ENCODE measurements at regions of chr17 and their contacts with region 1.

Region 1: DNA sequence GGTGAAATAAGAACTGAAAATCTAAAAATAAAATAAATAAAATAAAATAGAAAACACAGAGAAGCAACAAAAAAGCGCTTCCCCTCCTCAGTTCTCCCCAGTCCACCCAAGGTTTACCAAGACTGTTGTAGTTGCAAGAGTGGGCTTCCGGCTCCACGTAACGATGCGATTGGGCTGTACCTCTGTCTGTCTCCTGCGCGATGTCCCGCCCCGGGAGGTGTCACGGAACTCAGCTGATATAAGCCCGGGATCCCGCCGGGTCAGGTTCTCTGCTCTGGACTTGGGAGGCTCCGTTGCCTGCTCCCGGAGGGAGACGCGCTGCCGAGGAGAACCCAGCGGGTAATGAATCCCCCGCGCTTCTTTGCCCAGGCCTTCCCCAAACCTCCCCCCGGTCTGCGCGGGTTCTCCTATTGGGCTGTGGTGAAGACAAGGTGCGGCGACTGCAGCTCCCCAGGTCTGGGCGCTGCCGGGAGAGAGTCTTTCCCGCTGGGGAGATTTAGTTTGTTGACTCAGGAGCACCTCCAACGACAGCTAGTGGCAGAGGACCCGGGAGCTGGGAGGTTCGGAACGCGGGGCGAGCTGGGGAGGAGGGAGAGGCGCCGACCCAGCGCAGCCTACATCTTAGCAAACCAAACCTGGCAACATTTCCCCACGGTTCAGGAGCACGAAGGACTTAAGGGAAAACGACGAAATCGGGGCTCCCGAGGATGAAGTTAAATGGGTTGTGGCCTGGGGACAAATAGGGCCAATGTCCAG is at the start of gene SLFN5:
- DNase-seq: peak; percentile 96 to 97
- ATAC-seq: peak; percentile 65 to 86 (median 77)
- H3K4me3 ChIP-seq: peak within 1 kb of the TSS; percentile 78
- H3K4me3 Mint-ChIP-seq: peak within 1 kb of the TSS; percentile 97
- H3K27ac ChIP-seq: peak within 1 kb of the TSS; percentile 98
- H3K27ac Mint-ChIP-seq: peak within 1 kb of the TSS; percentile 97 to 100
- H3K4me1 ChIP-seq: peaks cover 52% of the 10 kb centered on the region
- H3K4me1 Mint-ChIP-seq: peaks cover 73 to 76% of the 10 kb centered on the region in 2 donors
- H3K27me3 ChIP-seq: no peaks in the 10 kb centered on the region
- H3K27me3 Mint-ChIP-seq: no peaks in the 10 kb centered on the region
- CTCF ChIP-seq: no peak
- total RNA-seq, gene SLFN5: 118 to 164 (median 141) TPM

Region 2: GRCh38 chr17:35170968-35171771 is 71.8 kb before region 1 on chr17:
- intact Hi-C with region 1: loop called (anchors 1 kb)
- DNase-seq: peak; percentile 20 to 71
- ATAC-seq: peak; percentile 69 to 87 (median 83)
- H3K4me3 ChIP-seq: no peak overlapping the region
- H3K4me3 Mint-ChIP-seq: peak overlapping the region; percentile 4
- H3K27ac ChIP-seq: no peak overlapping the region
- H3K27ac Mint-ChIP-seq: peak overlapping the region in 1 of 2 donors; percentile 72
- H3K4me1 ChIP-seq: peaks cover 12% of the 10 kb centered on the region
- H3K4me1 Mint-ChIP-seq: peaks cover 10 to 32% of the 10 kb centered on the region in 2 donors
- H3K27me3 ChIP-seq: no peaks in the 10 kb centered on the region
- H3K27me3 Mint-ChIP-seq: no peaks in the 10 kb centered on the region
- CTCF ChIP-seq: peak; percentile 66

Region 3: DNA sequence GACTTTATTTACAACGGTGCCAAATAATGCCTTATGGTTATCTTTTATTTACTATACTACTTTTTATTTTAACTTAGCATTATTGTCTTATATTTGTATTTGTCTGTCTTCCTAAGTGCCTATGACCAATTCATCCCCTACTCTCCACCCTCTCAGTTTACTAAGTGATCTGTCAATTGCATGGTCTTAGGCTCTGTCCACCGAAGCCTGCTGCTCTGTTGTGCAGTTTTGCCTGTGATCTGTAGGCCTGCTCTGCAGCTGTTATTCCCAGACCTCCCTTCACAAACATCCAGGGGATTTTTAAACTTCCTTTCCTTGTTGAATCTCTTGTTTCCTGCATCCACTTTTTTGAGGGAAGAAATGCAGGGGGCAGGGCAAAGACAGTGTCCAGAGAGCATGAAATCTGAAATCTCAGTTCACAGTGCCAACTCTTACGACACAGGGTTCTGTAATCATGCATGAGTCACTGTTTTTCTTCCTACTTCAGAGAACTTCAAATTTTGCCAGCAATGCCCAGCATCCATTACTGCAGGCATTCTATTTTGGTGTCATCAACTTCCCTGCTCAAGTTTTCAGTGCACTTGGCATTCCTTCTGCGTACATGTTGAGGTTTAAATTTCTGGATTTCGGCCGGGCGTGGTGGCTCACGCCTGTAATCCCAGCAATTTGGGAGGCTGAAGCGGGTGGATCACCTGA is 11.3 kb after region 1 on chr17:
- intact Hi-C with region 1: no loop called
- DNase-seq: no peak
- ATAC-seq: peak in 1 of 3 donors; percentile 58
- H3K4me3 ChIP-seq: no peak overlapping the region
- H3K4me3 Mint-ChIP-seq: peak overlapping the region; percentile 50
- H3K27ac ChIP-seq: peak overlapping the region; percentile 21
- H3K27ac Mint-ChIP-seq: peak overlapping the region; percentile 97 to 100
- H3K4me1 ChIP-seq: peaks cover 33% of the 10 kb centered on the region
- H3K4me1 Mint-ChIP-seq: peaks cover 71 to 84% of the 10 kb centered on the region in 2 donors
- H3K27me3 ChIP-seq: no peaks in the 10 kb centered on the region
- H3K27me3 Mint-ChIP-seq: no peaks in the 10 kb centered on the region
- CTCF ChIP-seq: no peak

Region 4: DNA sequence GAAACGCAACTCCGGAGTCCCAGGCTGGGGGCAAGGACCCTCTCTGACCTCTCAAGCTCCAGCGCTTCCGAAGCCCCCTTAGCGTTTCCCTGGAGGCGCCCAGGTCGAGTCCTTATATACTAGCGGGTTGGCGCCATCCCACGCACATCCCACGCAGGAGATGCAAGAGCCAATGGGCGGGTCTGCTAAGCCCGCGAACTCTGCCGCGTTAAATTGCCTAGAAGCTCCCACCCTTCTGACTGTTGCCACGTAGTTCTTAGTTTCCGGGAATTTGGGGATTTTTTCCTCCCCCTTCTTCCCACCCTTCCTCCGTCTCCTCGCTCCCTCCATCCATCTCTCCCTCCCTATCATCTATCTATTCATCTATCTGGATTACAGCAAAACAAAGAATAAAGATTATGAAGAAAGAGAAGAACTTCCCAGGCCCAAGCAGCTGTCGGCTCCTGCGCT is 130.6 kb after region 1 on chr17 and contains the start of gene SLFN11:
- intact Hi-C with region 1: loop called (anchors 5 kb)
- DNase-seq: peak; percentile 62 to 93
- ATAC-seq: peak; percentile 78 to 86 (median 83)
- H3K4me3 ChIP-seq: peak within 1 kb of the TSS; percentile 67
- H3K4me3 Mint-ChIP-seq: peak within 1 kb of the TSS; percentile 98
- H3K27ac ChIP-seq: peak within 1 kb of the TSS; percentile 88
- H3K27ac Mint-ChIP-seq: peak within 1 kb of the TSS; percentile 95 to 97
- H3K4me1 ChIP-seq: peaks cover 10% of the 10 kb centered on the region
- H3K4me1 Mint-ChIP-seq: peaks cover 23 to 37% of the 10 kb centered on the region in 2 donors
- H3K27me3 ChIP-seq: no peaks in the 10 kb centered on the region
- H3K27me3 Mint-ChIP-seq: no peaks in the 10 kb centered on the region
- CTCF ChIP-seq: no peak
- total RNA-seq, gene SLFN11: 22.9 to 31.8 (median 26.8) TPM

Region 5: GRCh38 chr17:35486920-35487732 is 244.1 kb after region 1 on chr17:
- intact Hi-C with region 1: loop called (anchors 1 kb)
- DNase-seq: peak; percentile 72 to 87
- ATAC-seq: peak; percentile 50 to 77 (median 72)
- H3K4me3 ChIP-seq: peak overlapping the region; percentile 86
- H3K4me3 Mint-ChIP-seq: peak overlapping the region; percentile 97
- H3K27ac ChIP-seq: peak overlapping the region; percentile 95
- H3K27ac Mint-ChIP-seq: peak overlapping the region; percentile 94 to 97
- H3K4me1 ChIP-seq: peaks cover 35% of the 10 kb centered on the region
- H3K4me1 Mint-ChIP-seq: peaks cover 85 to 88% of the 10 kb centered on the region in 2 donors
- H3K27me3 ChIP-seq: no peaks in the 10 kb centered on the region
- H3K27me3 Mint-ChIP-seq: no peaks in the 10 kb centered on the region
- CTCF ChIP-seq: no peak

Region 6: GRCh38 chr17:35889818-35890763 is 647.1 kb after region 1 on chr17:
- intact Hi-C with region 1: loop called (anchors 5 kb)
- DNase-seq: peak in 1 of 2 donors; percentile 62
- ATAC-seq: peak; percentile 21 to 51 (median 32)
- H3K4me3 ChIP-seq: no peak overlapping the region
- H3K4me3 Mint-ChIP-seq: peak overlapping the region; percentile 80
- H3K27ac ChIP-seq: peak overlapping the region; percentile 76
- H3K27ac Mint-ChIP-seq: peak overlapping the region; percentile 97 to 98
- H3K4me1 ChIP-seq: peaks cover 79% of the 10 kb centered on the region
- H3K4me1 Mint-ChIP-seq: peaks cover 67 to 82% of the 10 kb centered on the region in 2 donors
- H3K27me3 ChIP-seq: no peaks in the 10 kb centered on the region
- H3K27me3 Mint-ChIP-seq: no peaks in the 10 kb centered on the region
- CTCF ChIP-seq: no peak

Measured in natural killer cell (primary cell).